ENCODE measurements at regions of chr1 and their contacts with region 1.

Region 1: DNA sequence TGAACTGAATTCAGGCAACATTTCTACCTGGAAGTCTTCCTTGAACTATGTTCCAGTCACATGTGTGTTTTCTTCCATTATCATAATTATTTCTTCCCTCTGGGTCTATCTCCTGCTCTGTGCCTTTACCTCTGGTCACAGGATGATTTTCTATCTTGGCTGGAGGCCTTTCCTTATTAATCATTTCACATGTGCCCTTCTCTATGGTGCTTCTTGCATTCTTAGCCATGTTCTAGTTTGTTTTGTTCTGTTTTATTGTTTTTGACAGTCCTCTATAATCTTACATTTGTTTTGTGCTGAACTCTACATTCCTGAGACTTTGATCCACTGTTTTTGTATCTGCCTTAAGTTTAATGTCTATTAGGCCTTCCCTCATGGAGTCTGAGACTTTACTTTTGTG is 51.0 kb downstream of the SGIP1 start:
- DNase-seq: no peak
- H3K4me3 ChIP-seq: no peak overlapping the region
- H3K27ac ChIP-seq: no peak overlapping the region
- H3K4me1 ChIP-seq: no peaks in the 10 kb centered on the region
- H3K27me3 ChIP-seq: no peaks in the 10 kb centered on the region
- CTCF ChIP-seq: no peak
- EP300 ChIP-seq: no peak
- POLR2A ChIP-seq: no peak

Region 2: GRCh38 chr1:67552336-67552759 is 967.3 kb after region 1 on chr1:
- in situ Hi-C with region 1: no loop called
- intact Hi-C with region 1: loop called (anchors 5 kb)
- DNase-seq: peak; percentile 61
- H3K4me3 ChIP-seq: no peak overlapping the region
- H3K27ac ChIP-seq: peak overlapping the region in 1 of 4 donors; percentile 25
- H3K4me1 ChIP-seq: peaks cover 5 to 18% (median 9%) of the 10 kb centered on the region in 4 donors
- H3K27me3 ChIP-seq: no peaks in the 10 kb centered on the region
- CTCF ChIP-seq: no peak
- EP300 ChIP-seq: no peak
- POLR2A ChIP-seq: no peak